ENCODE measurements at regions of chr10 and their contacts with region 1.

Region 1: GRCh38 chr10:96719850-96720421 is 378 bp downstream of the PIK3AP1 start:
- H3K4me3 Mint-ChIP-seq: peak overlapping the region; percentile 97
- H3K27ac Mint-ChIP-seq: peak overlapping the region; percentile 95
- H3K4me1 Mint-ChIP-seq: peaks cover 53% of the 10 kb centered on the region
- H3K27me3 Mint-ChIP-seq: no peaks in the 10 kb centered on the region

Region 2: GRCh38 chr10:96395931-96396877 is 323.7 kb before region 1 on chr10:
- intact Hi-C with region 1: no loop called
- H3K4me3 Mint-ChIP-seq: no peak overlapping the region
- H3K27ac Mint-ChIP-seq: no peak overlapping the region
- H3K4me1 Mint-ChIP-seq: peaks cover 1% of the 10 kb centered on the region
- H3K27me3 Mint-ChIP-seq: peaks cover 46% of the 10 kb centered on the region

Region 3: DNA sequence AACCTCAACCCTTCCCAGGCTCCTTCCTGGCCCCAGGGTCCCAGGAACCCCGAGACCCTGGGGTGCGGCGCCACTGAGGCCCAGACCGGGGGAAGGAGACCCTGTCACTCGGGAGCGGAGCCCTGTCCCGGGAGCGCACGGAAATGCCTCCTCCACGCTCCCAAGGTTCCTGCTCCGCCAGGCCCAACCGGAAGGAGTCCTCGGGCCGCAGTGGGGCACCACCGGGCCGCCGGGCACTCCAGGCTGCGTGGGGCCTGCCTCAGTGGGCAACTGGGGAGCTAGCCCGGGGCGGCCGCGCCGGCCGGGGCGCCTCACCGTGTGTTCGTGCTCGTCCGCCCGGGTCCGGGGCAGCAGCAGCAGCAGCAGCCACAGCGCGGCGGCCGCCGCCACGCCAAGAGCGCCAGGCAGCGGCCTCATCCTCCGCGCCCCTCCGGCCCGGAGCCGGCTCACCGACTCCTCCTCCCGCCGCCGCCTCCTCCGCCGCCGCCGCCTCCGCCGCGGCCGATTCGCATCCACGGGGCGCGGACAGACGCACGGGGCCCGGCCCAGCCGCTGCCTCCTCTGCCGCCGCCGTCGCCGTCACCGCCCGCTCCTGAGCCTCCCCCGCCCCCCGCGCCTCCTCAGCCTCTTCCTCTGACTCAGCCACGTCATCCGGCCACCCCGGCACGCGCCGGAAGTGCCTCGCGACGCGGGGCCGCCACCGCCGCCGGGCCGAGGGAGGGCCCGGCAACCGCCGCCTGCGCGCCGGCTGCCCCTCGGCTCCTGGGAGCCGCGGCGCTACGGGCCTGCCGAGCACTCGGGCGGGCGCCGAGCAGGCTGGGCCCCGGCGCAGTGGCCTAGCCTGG is 133.3 kb before region 1 on chr10 and contains the start of gene TM9SF3:
- intact Hi-C with region 1: loop called (anchors 10 kb)
- H3K4me3 Mint-ChIP-seq: peak within 1 kb of the TSS; percentile 82
- H3K27ac Mint-ChIP-seq: no peak within 1 kb of the TSS
- H3K4me1 Mint-ChIP-seq: peaks cover 39% of the 10 kb centered on the region
- H3K27me3 Mint-ChIP-seq: no peaks in the 10 kb centered on the region

Region 4: DNA sequence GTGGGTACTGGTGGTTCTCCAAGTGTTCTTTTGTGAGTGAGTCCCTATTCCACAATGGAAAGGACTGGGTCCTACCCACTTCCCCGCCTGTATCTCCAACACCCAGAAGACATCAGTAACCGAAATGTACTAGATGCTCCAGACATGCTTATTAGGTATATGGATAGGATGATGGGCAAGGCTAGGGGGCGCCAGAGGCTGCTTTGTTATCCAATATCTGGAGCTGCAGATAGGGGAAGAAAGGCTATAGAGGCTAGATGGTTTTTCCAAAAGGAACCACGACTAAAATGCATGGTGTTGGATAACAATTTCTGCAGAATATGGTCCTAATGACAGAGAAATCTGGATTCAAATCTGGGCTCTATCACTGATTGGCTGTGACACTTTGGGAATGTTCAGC is 77.0 kb before region 1 on chr10:
- intact Hi-C with region 1: loop called (anchors 2 kb)
- H3K4me3 Mint-ChIP-seq: no peak overlapping the region
- H3K27ac Mint-ChIP-seq: no peak overlapping the region
- H3K4me1 Mint-ChIP-seq: peaks cover 28% of the 10 kb centered on the region
- H3K27me3 Mint-ChIP-seq: no peaks in the 10 kb centered on the region

Region 5: DNA sequence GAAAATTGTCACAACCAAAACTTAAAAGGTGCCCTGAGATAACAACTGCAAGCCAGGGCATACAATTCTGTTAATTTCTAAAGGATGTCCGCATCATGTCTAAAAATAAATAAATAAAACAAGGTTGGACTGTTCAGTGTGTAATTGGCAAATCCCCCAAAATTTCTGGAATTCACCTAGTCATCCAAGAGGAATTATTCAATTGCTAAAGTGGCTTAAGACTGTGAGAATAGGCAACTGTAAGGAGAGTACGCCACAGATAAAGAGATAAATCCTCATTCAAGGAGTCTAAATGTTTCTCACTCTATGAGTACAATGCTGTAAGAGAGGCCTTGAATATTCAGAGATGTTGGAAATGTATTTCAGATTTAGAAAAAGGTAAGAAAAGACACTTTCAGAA is 36.9 kb before region 1 on chr10:
- intact Hi-C with region 1: no loop called
- H3K4me3 Mint-ChIP-seq: no peak overlapping the region
- H3K27ac Mint-ChIP-seq: no peak overlapping the region
- H3K4me1 Mint-ChIP-seq: peaks cover 45% of the 10 kb centered on the region
- H3K27me3 Mint-ChIP-seq: no peaks in the 10 kb centered on the region

Region 6: GRCh38 chr10:96708456-96708855 is 11.5 kb before region 1 on chr10:
- intact Hi-C with region 1: loop called (anchors 1 kb)
- H3K4me3 Mint-ChIP-seq: peak overlapping the region; percentile 44
- H3K27ac Mint-ChIP-seq: peak overlapping the region; percentile 84
- H3K4me1 Mint-ChIP-seq: peaks cover 60% of the 10 kb centered on the region
- H3K27me3 Mint-ChIP-seq: no peaks in the 10 kb centered on the region